Right ventricle myocardium superior (tissue), 1 donor: ENCODE measurements at regions of chr1 and their contacts with region 1.

Region 1: GRCh38 chr1:56831871-56832693 is 12.9 kb upstream of the FYB2 start:
- DNase-seq: peak; percentile 61
- ATAC-seq: peak; percentile 84

Region 2: GRCh38 chr1:56877973-56878372 is 45.9 kb after region 1 on chr1:
- intact Hi-C with region 1: no loop called
- DNase-seq: no peak
- ATAC-seq: peak; percentile 39

Region 3: DNA sequence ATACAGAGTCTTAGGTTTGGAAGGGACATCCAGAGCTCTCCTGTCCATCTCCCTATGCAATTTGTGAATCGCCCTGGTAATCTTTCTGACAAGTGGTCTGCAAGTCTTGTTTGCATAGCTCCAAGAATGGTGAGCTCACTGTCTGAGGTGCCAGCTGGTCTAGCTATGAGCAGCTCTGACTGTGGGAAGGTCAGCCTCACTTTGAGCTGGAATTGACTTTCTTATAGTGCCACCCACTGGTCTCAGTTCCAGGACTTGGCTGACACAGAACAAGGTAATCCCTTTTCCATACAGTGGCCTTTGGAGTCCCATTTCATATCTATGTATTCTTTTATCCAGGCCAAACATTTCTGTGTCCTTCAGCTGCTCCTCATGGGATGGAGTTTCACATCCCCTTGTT is 229.3 kb after region 1 on chr1:
- intact Hi-C with region 1: loop called (anchors 10 kb)
- DNase-seq: no peak
- ATAC-seq: peak; percentile 45

Region 4: DNA sequence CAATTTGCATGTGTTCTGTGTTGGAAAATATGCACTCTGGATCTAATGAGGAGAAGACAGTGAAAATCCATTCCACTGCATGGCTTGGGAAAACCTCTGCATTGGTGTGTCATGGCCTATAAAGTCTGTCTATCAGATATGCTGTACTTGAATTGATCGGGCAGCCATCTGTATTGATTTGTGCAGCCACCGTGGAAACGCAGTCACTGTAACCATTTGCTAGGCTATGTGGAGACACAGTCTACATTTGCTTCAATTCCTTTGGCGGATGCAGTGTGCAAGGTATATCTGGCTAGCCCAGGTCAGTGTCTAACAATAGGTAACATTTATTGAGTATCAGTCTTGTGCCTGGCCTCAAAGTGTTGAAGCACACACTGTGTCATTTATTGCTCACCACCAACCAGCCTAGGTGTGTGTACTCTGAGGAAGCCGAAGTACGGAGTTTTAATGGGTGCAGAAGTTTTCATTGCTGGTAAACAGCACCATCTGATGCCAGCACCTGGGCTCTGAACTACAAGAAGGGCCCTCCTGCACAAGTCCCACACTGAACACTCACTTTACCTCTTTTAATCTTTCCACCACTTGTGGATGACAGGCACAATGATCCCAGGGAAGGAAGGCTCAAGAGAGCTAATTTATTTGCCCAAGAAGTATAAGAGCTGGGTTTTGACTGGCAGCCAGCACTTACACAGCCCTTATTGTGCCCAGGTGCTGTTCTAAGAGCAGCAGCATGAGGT is 508.4 kb after region 1 on chr1:
- intact Hi-C with region 1: loop called (anchors 10 kb)
- DNase-seq: no peak
- ATAC-seq: peak; percentile 56

Region 5: DNA sequence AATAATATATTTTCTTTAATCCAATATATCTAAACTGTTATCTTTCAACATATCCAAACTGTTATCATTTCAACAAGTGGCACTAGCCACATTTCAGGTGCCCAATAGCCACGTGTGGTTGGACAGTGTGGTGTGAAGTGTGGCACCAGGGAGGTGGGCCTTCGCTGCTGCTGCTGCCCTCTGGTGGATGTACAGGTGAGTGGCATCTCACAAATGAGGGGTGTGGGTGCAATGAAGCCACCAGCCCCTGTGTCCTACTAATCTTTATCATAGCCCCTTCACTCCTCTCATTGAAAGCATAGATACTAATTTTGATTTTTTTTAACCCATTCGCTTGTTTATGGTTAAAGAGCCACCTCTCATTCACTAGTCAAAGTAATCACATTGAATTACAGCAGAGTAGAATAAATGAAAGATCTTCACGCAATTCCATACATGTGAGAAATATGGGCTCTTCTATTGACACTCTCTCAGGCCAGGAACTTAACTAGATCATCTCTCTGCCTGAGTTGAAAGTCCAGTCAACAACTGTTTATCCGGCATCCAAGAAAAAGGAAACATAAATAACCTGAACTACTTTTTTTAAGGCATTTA is 1215.3 kb after region 1 on chr1:
- intact Hi-C with region 1: loop called (anchors 10 kb)
- DNase-seq: peak; percentile 52
- ATAC-seq: peak; percentile 61